ENCODE measurements at regions of chr17 and their contacts with region 1.

Region 1: DNA sequence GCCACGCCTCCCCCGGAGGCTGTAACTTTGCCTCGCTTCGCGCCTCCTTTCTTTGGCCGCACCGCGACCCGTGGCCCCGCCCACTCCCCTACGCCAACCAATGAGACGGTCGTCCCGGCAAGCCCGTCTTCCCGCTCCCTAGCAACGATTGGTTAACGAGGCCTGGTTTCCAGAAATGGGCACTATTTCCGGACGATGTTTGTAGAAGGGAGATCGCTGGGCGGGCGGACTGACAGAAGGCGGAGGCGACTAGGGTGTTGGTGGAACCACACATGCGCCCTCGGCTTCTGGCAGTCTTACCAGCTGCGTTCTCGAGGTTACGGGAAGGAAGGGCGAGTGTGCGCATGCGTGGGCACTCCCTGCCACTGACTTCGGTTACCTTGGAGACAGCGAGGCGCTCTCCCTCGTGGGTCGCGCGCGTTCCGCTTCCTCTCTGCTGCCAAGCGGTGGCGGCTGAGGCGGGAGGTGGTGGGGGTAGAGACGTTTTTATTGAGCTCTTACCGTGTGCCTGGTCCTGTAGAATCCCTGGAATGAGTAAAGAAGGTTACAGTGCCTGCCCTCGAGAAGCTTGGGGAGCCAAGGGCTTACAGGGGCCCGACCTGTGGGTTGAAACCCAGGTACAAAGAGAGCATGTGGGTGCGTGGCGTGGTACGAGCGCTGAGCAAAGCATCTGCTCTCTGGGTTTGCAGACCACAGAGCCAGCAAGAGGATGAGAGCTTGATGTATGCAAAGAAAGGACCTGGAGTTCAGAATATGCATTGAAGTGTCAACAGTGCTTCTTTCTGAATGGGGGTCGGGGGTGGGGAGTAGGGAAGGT is 500 bp upstream of the MAP3K14 start:
- DNase-seq: peak; percentile 99 to 100
- H3K4me3 ChIP-seq: peak overlapping the region; percentile 79 to 80
- H3K27ac ChIP-seq: peak overlapping the region; percentile 71 to 96
- H3K4me1 ChIP-seq: peaks cover 9 to 64% of the 10 kb centered on the region in 2 donors
- H3K27me3 ChIP-seq: no peaks in the 10 kb centered on the region
- CTCF ChIP-seq: no peak

Region 2: GRCh38 chr17:44350733-44351226 is 966.5 kb before region 1 on chr17:
- intact Hi-C with region 1: no loop called
- DNase-seq: no peak
- H3K4me3 ChIP-seq: no peak overlapping the region
- H3K27ac ChIP-seq: no peak overlapping the region
- H3K4me1 ChIP-seq: peaks cover 0 to 3% of the 10 kb centered on the region in 2 donors
- H3K27me3 ChIP-seq: no peaks in the 10 kb centered on the region
- CTCF ChIP-seq: peak; percentile 34 to 60 (median 49)

Region 3: DNA sequence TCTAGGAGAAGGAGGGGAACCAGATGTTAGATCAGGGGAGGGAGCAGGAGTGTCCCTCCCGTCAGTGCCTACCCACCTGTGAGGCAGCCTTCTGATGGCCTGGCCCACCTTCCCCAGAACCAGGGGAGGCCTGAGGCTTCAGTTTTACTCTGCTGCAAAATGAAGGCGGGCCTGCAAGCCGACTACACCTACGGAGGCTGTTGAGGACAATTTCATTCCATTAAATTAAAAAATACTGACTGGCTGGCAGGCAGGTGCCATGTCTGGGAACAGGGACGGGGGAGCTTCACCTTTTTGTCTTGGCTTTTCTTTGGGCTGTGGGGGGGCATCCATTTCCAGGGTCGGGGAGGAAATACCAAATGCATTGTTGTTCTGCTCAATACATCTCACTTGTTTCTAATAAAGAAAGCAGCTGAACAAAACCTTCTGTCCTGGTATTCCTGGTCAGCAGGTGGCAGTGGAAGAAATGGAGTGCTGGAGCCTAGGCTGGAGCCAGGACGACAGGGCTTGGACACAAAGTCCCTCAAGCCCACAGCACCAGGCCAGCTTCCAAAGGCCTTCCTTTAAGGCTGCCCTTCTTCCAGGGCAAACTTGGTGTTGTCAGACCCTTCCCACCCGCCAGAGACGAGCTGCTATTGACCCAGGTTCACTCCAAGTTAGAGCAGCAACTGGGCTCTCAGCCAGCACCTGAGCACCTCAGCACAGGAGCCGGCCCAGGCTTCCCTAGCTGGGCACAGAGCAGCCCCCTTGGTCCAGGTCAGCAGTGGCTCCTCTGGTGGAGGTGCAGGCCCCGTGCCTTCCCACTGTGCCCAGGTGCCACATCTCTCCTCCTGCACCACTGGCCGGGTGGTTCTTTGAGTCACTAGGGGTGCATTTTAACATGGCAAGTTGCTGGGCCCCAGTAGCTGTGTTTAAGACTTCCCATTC is 208.5 kb before region 1 on chr17:
- intact Hi-C with region 1: no loop called
- DNase-seq: no peak
- H3K4me3 ChIP-seq: no peak overlapping the region
- H3K27ac ChIP-seq: peak overlapping the region; percentile 81
- H3K4me1 ChIP-seq: peaks cover 14 to 35% of the 10 kb centered on the region in 2 donors
- H3K27me3 ChIP-seq: no peaks in the 10 kb centered on the region
- CTCF ChIP-seq: no peak

Region 4: GRCh38 chr17:45148183-45149036 is 168.9 kb before region 1 on chr17 and contains the start of gene HEXIM1:
- intact Hi-C with region 1: loop called (anchors 5 kb)
- DNase-seq: peak; percentile 98 to 100
- H3K4me3 ChIP-seq: peak within 1 kb of the TSS; percentile 73 to 90
- H3K27ac ChIP-seq: peak within 1 kb of the TSS; percentile 96 to 97
- H3K4me1 ChIP-seq: peaks cover 11 to 47% of the 10 kb centered on the region in 2 donors
- H3K27me3 ChIP-seq: no peaks in the 10 kb centered on the region
- CTCF ChIP-seq: no peak
- total RNA-seq, gene HEXIM1: 23.7 TPM

Region 5: GRCh38 chr17:45247429-45248131 is 69.7 kb before region 1 on chr17:
- intact Hi-C with region 1: no loop called
- DNase-seq: peak; percentile 83 to 90
- H3K4me3 ChIP-seq: peak overlapping the region; percentile 55 to 61
- H3K27ac ChIP-seq: no peak overlapping the region
- H3K4me1 ChIP-seq: peaks cover 5 to 12% of the 10 kb centered on the region in 2 donors
- H3K27me3 ChIP-seq: no peaks in the 10 kb centered on the region
- CTCF ChIP-seq: no peak

Region 6: DNA sequence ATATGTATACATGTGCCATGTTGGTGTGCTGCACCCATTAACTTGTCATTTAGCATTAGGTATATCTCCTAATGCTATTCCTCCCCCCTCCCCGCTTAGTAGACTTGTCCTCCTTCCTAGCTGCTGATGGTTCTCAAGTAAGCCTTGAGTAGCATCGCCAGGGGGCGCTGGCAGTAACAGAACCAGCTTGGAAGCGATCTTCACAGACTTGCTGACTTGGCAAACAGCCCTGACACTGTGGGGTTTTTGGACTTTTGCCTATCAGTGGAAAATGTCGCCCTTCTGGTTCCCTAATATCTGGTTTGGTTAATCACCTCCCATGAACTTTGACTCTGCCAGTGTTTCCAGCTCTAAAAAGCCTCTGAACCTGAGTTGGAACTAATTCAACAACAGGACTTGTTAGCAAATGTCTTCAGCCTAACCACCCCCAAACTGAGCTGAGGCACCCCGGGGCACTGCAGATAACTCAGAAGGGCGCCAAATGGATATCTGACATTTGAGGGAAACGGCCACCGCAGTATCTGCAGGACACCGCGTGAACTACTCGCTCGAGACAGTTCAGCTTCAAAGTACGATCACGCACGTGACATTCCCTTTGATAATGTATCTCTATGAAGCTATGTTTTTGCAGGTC is 40.0 kb before region 1 on chr17:
- intact Hi-C with region 1: loop called (anchors 1 kb)
- DNase-seq: peak; percentile 73 to 95
- H3K4me3 ChIP-seq: peak overlapping the region in 1 of 2 donors; percentile 42
- H3K27ac ChIP-seq: peak overlapping the region in 1 of 2 donors; percentile 40
- H3K4me1 ChIP-seq: peaks cover 0 to 11% of the 10 kb centered on the region in 2 donors
- H3K27me3 ChIP-seq: no peaks in the 10 kb centered on the region
- CTCF ChIP-seq: peak; percentile 80 to 86 (median 85)

Region 7: GRCh38 chr17:45371414-45372327 is 54.4 kb after region 1 on chr17:
- intact Hi-C with region 1: loop called (anchors 1 kb)
- DNase-seq: peak in 1 of 2 donors; percentile 93
- H3K4me3 ChIP-seq: peak overlapping the region; percentile 46 to 50
- H3K27ac ChIP-seq: peak overlapping the region; percentile 64 to 73
- H3K4me1 ChIP-seq: peaks cover 5 to 24% of the 10 kb centered on the region in 2 donors
- H3K27me3 ChIP-seq: no peaks in the 10 kb centered on the region
- CTCF ChIP-seq: no peak

Measured in ascending aorta (tissue), 2 donors.